ENCODE measurements at regions of chr19 and their contacts with region 1.

Region 1: DNA sequence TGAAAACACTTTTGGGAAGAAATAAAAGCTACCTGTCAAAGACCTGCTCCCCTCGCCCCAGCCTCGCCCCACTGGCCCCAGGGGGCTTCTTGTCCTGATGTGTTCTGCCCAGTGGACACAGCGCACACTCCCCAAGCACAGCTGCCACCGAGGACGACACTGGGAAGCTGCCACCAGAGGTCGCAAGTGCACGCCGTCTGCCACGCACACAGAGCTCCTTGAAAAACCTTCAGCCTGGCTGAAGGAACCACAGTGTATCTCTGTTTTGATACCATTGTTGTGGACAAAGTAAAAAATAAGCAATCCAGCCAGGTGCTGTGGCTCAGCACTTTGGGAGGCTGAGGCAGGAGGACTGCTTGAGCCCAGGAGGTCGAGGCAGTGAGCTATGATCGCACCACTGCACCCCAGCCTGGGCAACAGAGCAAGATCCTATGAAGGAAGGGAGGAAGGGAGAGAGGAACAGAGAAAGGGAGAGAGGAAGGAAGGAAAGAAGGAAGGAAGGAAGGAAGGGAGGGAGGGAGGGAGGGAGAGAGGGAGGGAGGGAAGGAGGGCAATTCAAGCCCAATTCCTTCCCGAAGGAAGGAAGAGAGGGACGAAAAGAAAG is 57.3 kb downstream of the CEBPG start:
- DNase-seq: peak; percentile 83
- H3K4me3 ChIP-seq: peak overlapping the region in 1 of 2 experiments; percentile 28; a peak in 1 of 4 replicates
- H3K27ac ChIP-seq: peak overlapping the region in 1 of 2 experiments; percentile 73; a peak in 1 of 4 replicates
- H3K4me1 ChIP-seq: peaks cover 16 to 44% of the 10 kb centered on the region in 2 experiments
- H3K27me3 ChIP-seq: no peaks in the 10 kb centered on the region
- CTCF ChIP-seq: peak; percentile 84
- EP300 ChIP-seq: no peak
- RAD21 ChIP-seq: peak; percentile 97

Region 2: DNA sequence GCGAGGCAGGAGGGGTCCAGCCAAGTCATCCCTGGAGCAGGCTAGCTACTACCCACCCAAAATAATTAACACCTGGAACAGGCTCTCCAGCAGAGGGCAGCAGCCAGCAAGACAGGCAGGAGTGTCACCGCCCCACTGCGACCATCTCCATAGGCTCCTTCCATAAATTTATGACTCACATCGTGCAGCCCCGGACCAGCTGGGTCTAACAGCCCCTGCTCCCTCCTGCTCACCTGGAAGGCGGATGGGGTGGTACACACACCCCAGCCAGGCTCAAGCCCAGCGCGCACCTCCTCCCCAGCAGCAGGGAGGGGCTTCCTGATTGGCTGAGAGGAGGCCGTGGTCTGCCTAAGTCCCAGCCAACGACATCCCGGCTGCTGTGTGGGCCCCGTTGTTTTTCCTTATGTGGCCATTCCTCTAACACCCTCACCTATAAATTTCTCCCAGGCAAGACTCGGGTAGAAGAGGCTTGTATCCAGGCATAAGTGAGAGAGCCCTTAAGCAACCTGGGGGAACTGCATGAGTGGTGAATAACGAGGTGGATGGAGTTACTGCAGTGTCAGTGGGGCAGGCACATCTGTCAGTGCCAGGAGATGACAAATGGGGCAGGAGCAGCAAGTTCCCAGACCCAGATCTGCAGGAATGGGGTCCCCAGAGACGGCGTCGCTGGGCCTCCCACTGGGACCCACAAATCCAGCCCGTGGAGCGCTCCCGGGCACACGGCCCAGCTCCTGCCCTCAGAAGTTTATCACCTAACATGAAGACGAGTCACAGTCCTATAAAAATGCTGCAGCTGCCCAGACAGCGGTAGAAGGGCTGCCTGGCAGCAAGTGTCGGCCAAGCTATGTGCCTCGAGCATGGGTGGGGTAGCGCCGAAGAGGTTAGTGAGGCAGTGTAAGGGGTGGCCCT is 14.2 kb before region 1 on chr19:
- CTCF ChIA-PET with region 1: interaction called, 30 read pairs
- POLR2A ChIA-PET with region 1: no interaction called
- DNase-seq: peak; percentile 87
- H3K4me3 ChIP-seq: no peak overlapping the region; a peak in 1 of 4 replicates
- H3K27ac ChIP-seq: no peak overlapping the region
- H3K4me1 ChIP-seq: peaks cover 0 to 40% of the 10 kb centered on the region in 2 experiments; a peak in 1 of 4 replicates
- H3K27me3 ChIP-seq: no peaks in the 10 kb centered on the region
- CTCF ChIP-seq: peak; percentile 61
- EP300 ChIP-seq: no peak
- RAD21 ChIP-seq: peak; percentile 77

Region 3: DNA sequence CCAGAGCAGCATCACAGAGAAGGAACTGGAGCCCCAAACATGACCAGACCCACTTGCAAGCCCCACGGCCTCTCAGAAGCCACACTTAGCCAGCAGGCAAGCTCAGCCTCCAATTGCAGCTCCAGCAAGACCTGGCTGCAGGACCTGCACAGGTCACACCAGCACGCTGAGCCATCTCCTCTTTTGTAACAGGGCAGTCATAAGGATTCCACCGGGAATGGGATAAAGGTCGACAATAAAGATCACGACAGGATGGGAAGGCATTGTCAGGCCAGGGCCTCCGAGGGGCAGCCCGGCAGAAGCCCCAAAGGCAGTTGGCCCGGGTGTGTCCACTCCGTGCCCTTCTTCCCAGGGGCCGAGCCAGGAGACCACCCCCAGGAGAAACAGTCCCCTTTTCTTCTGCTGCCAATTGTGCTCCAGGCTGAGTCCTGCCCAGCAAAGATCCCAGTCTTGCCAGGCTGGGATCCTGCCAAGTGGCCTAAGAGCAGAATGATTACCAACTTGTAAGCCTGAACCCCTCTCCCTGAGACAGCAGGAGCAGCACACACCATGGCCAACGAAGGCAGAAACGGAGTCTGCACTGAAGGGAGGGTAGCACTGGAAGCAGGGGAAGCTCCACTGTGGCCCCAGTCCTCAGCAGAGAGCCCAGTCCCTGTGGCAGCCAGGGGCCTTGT is 78.3 kb after region 1 on chr19:
- CTCF ChIA-PET with region 1: interaction called, 14 read pairs
- POLR2A ChIA-PET with region 1: interaction called, 3 read pairs
- DNase-seq: no peak
- H3K4me3 ChIP-seq: no peak overlapping the region
- H3K27ac ChIP-seq: peak overlapping the region in 1 of 2 experiments; percentile 97; a peak in 2 of 4 replicates
- H3K4me1 ChIP-seq: peaks cover 0 to 63% of the 10 kb centered on the region in 2 experiments; a peak in 2 of 4 replicates
- H3K27me3 ChIP-seq: no peaks in the 10 kb centered on the region
- CTCF ChIP-seq: no peak
- EP300 ChIP-seq: no peak
- RAD21 ChIP-seq: no peak

Region 4: GRCh38 chr19:33639035-33639681 is 208.4 kb after region 1 on chr19:
- CTCF ChIA-PET with region 1: interaction called, 10 read pairs
- POLR2A ChIA-PET with region 1: no interaction called
- DNase-seq: no peak
- H3K4me3 ChIP-seq: no peak overlapping the region
- H3K27ac ChIP-seq: no peak overlapping the region
- H3K4me1 ChIP-seq: peaks cover 0 to 5% of the 10 kb centered on the region in 2 experiments; a peak in 1 of 4 replicates
- H3K27me3 ChIP-seq: no peaks in the 10 kb centered on the region
- CTCF ChIP-seq: no peak
- EP300 ChIP-seq: no peak
- RAD21 ChIP-seq: no peak

Region 5: DNA sequence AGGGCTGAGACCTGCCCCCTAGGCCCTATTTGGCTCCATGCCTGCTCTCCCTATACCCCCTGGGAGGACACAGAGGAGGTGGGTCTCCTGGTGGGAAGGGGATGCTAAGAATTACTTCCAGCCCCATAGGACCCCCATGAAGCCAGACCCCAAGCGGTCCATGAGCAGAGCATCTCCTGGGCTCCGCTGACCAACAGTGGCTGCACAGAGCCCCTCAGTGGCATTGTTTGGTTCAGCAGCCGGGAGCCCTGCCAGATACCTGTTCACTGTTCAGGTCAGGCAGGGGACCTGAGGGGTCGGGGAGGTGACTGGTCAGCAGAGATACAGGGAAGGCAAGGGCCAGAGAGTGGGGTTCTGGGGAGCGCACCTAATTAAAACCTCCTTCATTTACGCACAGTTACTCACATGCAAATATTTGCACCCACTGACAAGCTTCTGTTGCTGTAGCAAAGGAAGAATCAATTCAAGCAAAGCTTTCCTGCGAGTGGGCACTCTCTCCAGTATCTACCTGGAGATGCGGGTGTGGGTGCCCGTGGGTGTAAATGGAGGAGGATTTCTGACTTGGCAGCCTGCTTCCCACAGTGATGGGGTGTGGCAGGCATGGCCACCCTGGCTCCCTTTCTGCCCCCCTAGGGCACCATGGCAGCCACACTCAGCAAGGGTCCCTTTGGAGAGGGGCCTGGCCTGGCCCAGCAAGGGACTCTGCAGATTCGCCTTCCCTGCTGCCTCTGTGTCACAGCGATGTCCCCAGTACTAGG is 274.5 kb after region 1 on chr19:
- CTCF ChIA-PET with region 1: interaction called, 14 read pairs
- POLR2A ChIA-PET with region 1: no interaction called
- DNase-seq: no peak
- H3K4me3 ChIP-seq: no peak overlapping the region
- H3K27ac ChIP-seq: no peak overlapping the region
- H3K4me1 ChIP-seq: peaks cover 0 to 24% of the 10 kb centered on the region in 2 experiments; a peak in 1 of 4 replicates
- H3K27me3 ChIP-seq: no peaks in the 10 kb centered on the region
- CTCF ChIP-seq: no peak
- EP300 ChIP-seq: no peak
- RAD21 ChIP-seq: peak; percentile 67